ENCODE measurements at regions of chr3 and their contacts with region 1.

Region 1: GRCh38 chr3:73056014-73056844 is 5.2 kb upstream of the EBLN2 start:
- DNase-seq: no peak
- H3K4me3 ChIP-seq: no peak overlapping the region
- H3K27ac ChIP-seq: no peak overlapping the region
- H3K4me1 ChIP-seq: peaks cover 0 to 8% (median 2%) of the 10 kb centered on the region in 4 donors
- H3K27me3 ChIP-seq: no peaks in the 10 kb centered on the region
- CTCF ChIP-seq: peak; percentile 56 to 68

Region 2: GRCh38 chr3:72768936-72769335 is 287.3 kb before region 1 on chr3:
- intact Hi-C with region 1: no loop called
- DNase-seq: no peak
- H3K4me3 ChIP-seq: no peak overlapping the region
- H3K27ac ChIP-seq: no peak overlapping the region
- H3K4me1 ChIP-seq: no peaks in the 10 kb centered on the region
- H3K27me3 ChIP-seq: no peaks in the 10 kb centered on the region
- CTCF ChIP-seq: no peak

Region 3: GRCh38 chr3:72938471-72939265 is 117.6 kb before region 1 on chr3:
- intact Hi-C with region 1: loop called (anchors 5 kb)
- DNase-seq: peak; percentile 84
- H3K4me3 ChIP-seq: no peak overlapping the region
- H3K27ac ChIP-seq: peak overlapping the region; percentile 1 to 71
- H3K4me1 ChIP-seq: peaks cover 0 to 11% (median 2%) of the 10 kb centered on the region in 4 donors
- H3K27me3 ChIP-seq: no peaks in the 10 kb centered on the region
- CTCF ChIP-seq: peak; percentile 51 to 85

Measured in tibial artery (tissue), 4 donors.